Naive thymus-derived CD8-positive, alpha-beta T cell (primary cell): ENCODE measurements at regions of chr13 and their contacts with region 1.

Region 1: DNA sequence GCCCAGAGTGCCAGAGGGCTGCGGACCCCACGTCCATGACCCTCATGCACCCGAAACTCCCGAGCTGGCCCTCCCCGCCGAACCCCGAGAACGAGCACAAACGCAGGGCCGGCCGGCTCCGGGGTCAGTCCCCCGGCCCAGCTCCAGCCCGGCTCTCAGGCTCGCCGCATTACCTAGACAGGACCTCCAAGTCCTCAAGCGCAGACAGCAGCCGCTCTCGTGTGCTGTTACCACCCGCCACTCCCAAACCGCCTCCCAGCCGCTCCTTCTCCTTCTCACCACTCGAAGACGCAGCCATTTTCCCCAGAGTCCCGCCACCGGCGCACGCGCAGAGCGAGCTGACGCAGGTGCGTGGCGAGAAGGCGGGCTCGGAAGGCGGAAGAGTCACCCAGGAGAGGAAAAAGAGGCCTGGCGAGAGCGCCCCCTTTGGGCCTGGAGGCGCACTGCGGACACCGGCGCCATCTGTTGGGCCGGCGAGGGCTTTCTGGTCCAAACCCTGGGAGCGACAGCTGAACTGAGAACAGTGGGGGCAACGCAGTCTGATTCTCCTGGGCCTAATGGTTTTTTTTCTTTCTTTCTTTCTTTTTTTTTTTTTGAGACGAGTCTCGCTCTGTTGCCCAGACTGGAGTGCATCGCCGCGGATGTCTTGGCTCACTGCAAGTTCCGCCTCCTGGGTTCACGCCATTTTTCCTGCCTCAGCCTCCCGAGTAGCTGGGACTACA is at the start of gene MED4:
- DNase-seq: peak; percentile 93 to 99 (median 98)
- ATAC-seq: peak; percentile 92 to 93
- H3K4me3 Mint-ChIP-seq: peak within 1 kb of the TSS; percentile 89 to 99 (median 96)
- H3K27ac Mint-ChIP-seq: peak within 1 kb of the TSS; percentile 92 to 99 (median 98)
- H3K4me1 Mint-ChIP-seq: peaks cover 16 to 49% (median 40%) of the 10 kb centered on the region in 4 donors
- H3K27me3 Mint-ChIP-seq: no peaks in the 10 kb centered on the region
- polyA plus RNA-seq, gene MED4: 88.9 to 91.9 (median 90.1) TPM

Region 2: DNA sequence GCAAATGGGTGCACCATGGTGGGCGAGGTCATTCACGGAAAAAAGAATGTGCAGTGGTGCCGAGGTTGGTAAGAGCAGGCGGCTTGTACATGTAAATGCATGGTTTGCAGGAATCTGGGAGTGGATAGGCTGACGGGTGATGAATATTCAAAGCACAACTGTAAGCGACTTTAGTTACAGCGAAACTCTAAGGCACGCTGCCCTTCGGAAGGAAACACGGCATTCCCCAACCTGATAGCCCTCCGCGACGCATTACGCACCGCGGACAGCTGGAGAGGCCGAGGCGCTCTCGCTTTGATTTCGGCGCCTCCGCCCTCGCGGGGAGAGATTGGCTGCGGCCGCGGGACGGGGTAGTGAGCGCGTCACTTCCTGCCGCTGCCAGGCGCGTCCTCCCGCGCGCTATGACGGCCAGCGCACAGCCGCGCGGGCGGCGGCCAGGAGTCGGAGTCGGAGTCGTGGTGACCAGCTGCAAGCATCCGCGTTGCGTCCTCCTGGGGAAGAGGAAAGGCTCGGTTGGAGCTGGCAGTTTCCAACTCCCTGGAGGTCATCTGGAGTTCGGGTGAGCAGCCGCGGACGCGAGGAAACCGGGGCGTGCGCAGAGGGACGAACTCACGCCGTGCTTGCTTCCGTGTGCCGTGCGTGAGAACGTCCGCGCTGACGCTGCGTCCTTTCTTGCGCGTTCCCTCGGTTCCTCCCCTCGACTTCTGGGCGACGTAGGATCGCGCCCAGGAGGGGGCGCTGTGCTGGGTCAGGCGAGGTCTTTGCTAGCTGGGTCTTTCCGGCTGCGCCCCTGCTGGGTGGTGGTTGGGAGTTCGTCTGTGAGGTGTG is 57.4 kb before region 1 on chr13 and contains the start of gene NUDT15:
- POLR2A ChIA-PET with region 1: interaction called, 24 read pairs
- DNase-seq: peak; percentile 94 to 98 (median 96)
- ATAC-seq: peak; percentile 89 to 90
- H3K4me3 Mint-ChIP-seq: peak within 1 kb of the TSS; percentile 85 to 96 (median 93)
- H3K27ac Mint-ChIP-seq: peak within 1 kb of the TSS; percentile 94 to 100 (median 98)
- H3K4me1 Mint-ChIP-seq: peaks cover 15 to 40% (median 26%) of the 10 kb centered on the region in 4 donors
- H3K27me3 Mint-ChIP-seq: no peaks in the 10 kb centered on the region
- polyA plus RNA-seq, gene NUDT15: 7.0 to 8.5 (median 7.3) TPM